ENCODE measurements at regions of chr15 and their contacts with region 1.

Region 1: DNA sequence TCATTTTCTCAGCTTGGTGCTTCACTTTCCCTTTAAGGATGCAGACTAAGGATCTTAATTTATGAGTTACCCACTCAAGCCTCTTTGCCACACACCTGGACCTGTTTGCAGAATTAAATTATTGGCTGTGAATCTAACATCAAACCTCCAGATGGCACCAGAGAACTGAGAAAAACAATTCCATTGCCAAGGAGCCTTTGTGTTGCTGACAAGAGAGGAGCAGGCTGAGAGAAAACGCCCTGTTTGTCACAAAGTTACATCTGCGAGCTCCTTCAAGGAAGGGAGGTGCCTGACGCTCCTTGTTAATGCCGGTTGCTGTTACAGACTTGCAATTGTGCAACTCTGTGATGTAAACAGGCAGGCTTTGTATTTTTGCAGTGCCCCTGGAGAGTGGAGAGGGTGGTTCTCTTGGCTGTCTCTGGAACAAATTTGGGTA is 36.3 kb upstream of the TMC3 start:
- DNase-seq: peak; percentile 46
- H3K4me3 Mint-ChIP-seq: no peak overlapping the region
- H3K27ac Mint-ChIP-seq: no peak overlapping the region
- H3K4me1 Mint-ChIP-seq: no peaks in the 10 kb centered on the region
- H3K27me3 Mint-ChIP-seq: peaks cover 49% of the 10 kb centered on the region
- CTCF ChIP-seq: peak; percentile 34

Region 2: GRCh38 chr15:81939604-81940440 is 529.5 kb after region 1 on chr15:
- CTCF ChIA-PET with region 1: no interaction called
- intact Hi-C with region 1: loop called (anchors 5 kb)
- DNase-seq: peak; percentile 37
- H3K4me3 Mint-ChIP-seq: no peak overlapping the region
- H3K27ac Mint-ChIP-seq: no peak overlapping the region
- H3K4me1 Mint-ChIP-seq: no peaks in the 10 kb centered on the region
- H3K27me3 Mint-ChIP-seq: peaks cover 13% of the 10 kb centered on the region
- CTCF ChIP-seq: peak; percentile 40

Region 3: GRCh38 chr15:82197733-82198594 is 787.6 kb after region 1 on chr15:
- CTCF ChIA-PET with region 1: no interaction called
- intact Hi-C with region 1: loop called (anchors 1 kb)
- DNase-seq: peak; percentile 80
- H3K4me3 Mint-ChIP-seq: no peak overlapping the region
- H3K27ac Mint-ChIP-seq: no peak overlapping the region
- H3K4me1 Mint-ChIP-seq: peaks cover 6% of the 10 kb centered on the region
- H3K27me3 Mint-ChIP-seq: no peaks in the 10 kb centered on the region
- CTCF ChIP-seq: peak; percentile 82